CD8-positive, alpha-beta T cell (primary cell): ENCODE measurements at regions of chr12 and their contacts with region 1.

Region 1: GRCh38 chr12:53344824-53345485 is 8.8 kb upstream of the SP7 start:
- DNase-seq: peak; percentile 44 to 85 (median 70)
- ATAC-seq: peak; percentile 85
- H3K4me3 ChIP-seq: peak overlapping the region; percentile 61 to 72
- H3K4me3 Mint-ChIP-seq: peak overlapping the region; percentile 93
- H3K27ac ChIP-seq: peak overlapping the region; percentile 27 to 47
- H3K27ac Mint-ChIP-seq: peak overlapping the region; percentile 77
- H3K4me1 ChIP-seq: peaks cover 16% of the 10 kb centered on the region
- H3K4me1 Mint-ChIP-seq: peaks cover 15% of the 10 kb centered on the region
- H3K27me3 ChIP-seq: no peaks in the 10 kb centered on the region
- H3K27me3 Mint-ChIP-seq: no peaks in the 10 kb centered on the region
- CTCF ChIP-seq: peak; percentile 58

Region 2: GRCh38 chr12:53086361-53086760 is 258.6 kb before region 1 on chr12:
- CTCF ChIA-PET with region 1: no interaction called
- POLR2A ChIA-PET with region 1: no interaction called
- intact Hi-C with region 1: no loop called
- DNase-seq: no peak
- ATAC-seq: no peak
- H3K4me3 ChIP-seq: no peak overlapping the region
- H3K4me3 Mint-ChIP-seq: no peak overlapping the region
- H3K27ac ChIP-seq: no peak overlapping the region
- H3K27ac Mint-ChIP-seq: no peak overlapping the region
- H3K4me1 ChIP-seq: no peaks in the 10 kb centered on the region
- H3K4me1 Mint-ChIP-seq: no peaks in the 10 kb centered on the region
- H3K27me3 ChIP-seq: no peaks in the 10 kb centered on the region
- H3K27me3 Mint-ChIP-seq: peaks cover 7% of the 10 kb centered on the region
- CTCF ChIP-seq: no peak

Region 3: GRCh38 chr12:53205747-53206419 is 139.1 kb before region 1 on chr12:
- CTCF ChIA-PET with region 1: interaction called, 11 read pairs
- POLR2A ChIA-PET with region 1: no interaction called
- intact Hi-C with region 1: no loop called
- DNase-seq: peak in 8 of 9 experiments; percentile 43 to 74 (median 69)
- ATAC-seq: peak; percentile 53
- H3K4me3 ChIP-seq: peak overlapping the region; percentile 68 to 71
- H3K4me3 Mint-ChIP-seq: peak overlapping the region; percentile 84
- H3K27ac ChIP-seq: peak overlapping the region; percentile 48 to 71
- H3K27ac Mint-ChIP-seq: peak overlapping the region; percentile 90
- H3K4me1 ChIP-seq: peaks cover 70% of the 10 kb centered on the region
- H3K4me1 Mint-ChIP-seq: peaks cover 71% of the 10 kb centered on the region
- H3K27me3 ChIP-seq: no peaks in the 10 kb centered on the region
- H3K27me3 Mint-ChIP-seq: no peaks in the 10 kb centered on the region
- CTCF ChIP-seq: no peak

Region 4: GRCh38 chr12:53414756-53415417 is 69.9 kb after region 1 on chr12:
- CTCF ChIA-PET with region 1: interaction called, 27 read pairs
- POLR2A ChIA-PET with region 1: interaction called, 4 read pairs
- intact Hi-C with region 1: no loop called
- DNase-seq: no peak
- ATAC-seq: no peak
- H3K4me3 ChIP-seq: no peak overlapping the region
- H3K4me3 Mint-ChIP-seq: no peak overlapping the region
- H3K27ac ChIP-seq: no peak overlapping the region
- H3K27ac Mint-ChIP-seq: peak overlapping the region; percentile 50
- H3K4me1 ChIP-seq: no peaks in the 10 kb centered on the region
- H3K4me1 Mint-ChIP-seq: peaks cover 30% of the 10 kb centered on the region
- H3K27me3 ChIP-seq: no peaks in the 10 kb centered on the region
- H3K27me3 Mint-ChIP-seq: no peaks in the 10 kb centered on the region
- CTCF ChIP-seq: no peak